A673 (cell line): ENCODE measurements at regions of chr1 and their contacts with region 1.

Region 1: DNA sequence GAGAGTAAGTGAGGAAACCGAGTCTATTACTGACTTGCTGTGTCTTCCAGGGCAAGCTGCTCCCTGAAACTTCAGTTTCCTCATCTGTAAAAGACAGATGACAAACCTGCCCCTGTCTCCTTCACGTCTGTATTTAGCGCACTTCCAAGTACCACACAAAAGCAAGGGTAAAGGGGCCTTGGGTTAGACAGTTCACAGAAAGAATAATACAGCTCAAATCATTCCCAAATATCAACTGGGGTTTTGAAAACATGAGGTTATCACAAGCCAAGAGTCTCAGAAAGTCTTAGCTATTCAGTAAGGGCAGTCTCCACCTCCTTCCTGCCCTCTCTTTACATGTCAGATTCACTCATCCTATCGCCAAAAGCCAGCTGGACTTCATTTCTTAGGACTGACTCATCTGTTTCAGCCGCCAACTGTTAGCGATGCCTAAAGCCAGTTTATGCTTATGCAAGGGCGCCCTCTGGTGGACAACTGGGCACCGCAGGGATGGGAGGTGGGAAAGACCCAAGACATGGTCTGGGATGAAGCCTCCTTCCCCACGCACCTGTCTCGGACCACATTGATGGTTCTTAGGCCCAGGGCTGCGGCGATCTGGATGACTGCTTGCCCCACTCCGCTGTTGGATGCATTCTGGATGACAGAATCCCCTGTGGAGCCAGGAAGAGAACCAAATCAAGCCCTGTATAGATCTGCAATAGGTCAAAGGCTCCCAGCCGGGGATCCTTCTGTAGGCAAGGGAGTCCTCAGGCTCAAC is 21.1 kb upstream of the SRSF4 start:
- DNase-seq: peak; percentile 95
- H3K4me3 ChIP-seq: no peak overlapping the region
- H3K27ac ChIP-seq: peak overlapping the region; percentile 1
- H3K4me1 ChIP-seq: peaks cover 8% of the 10 kb centered on the region
- H3K27me3 ChIP-seq: no peaks in the 10 kb centered on the region
- CTCF ChIP-seq: peak; percentile 98

Region 2: DNA sequence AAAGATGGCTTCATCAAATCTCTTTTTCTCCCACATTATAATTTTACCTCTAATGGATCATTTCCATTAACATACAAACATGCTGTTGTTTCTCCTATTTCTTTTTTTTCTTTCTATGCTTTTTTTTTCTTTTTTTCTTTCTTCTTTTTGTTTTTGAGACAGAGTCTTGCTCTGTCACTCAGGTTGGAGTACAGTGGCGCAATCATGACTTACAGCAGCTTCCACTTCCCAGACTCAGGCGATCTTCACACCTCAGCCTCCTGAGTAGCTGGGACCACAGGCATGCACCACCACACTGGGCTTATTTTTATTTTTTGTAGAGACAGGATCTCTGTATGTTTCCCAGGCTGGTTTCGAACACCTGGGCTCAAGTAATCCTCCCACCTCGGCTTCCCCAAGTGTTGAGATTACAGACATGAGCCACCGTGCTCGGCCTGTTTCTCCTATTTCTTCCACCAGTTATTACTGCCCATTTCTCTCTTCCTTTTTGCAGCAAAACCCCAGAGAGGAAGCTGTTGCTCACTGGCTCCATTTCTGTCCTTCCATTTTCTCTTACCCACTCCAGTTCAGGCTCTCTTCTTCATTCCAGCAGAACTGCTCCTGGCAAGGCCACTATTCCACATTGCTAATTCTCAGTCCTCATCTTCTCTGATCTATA is 422.9 kb before region 1 on chr1:
- CTCF ChIA-PET with region 1: interaction called, 5 read pairs
- POLR2A ChIA-PET with region 1: no interaction called
- intact Hi-C with region 1: loop called (anchors 2 kb)
- DNase-seq: no peak
- H3K4me3 ChIP-seq: no peak overlapping the region
- H3K27ac ChIP-seq: no peak overlapping the region
- H3K4me1 ChIP-seq: no peaks in the 10 kb centered on the region
- H3K27me3 ChIP-seq: no peaks in the 10 kb centered on the region
- CTCF ChIP-seq: no peak

Region 3: GRCh38 chr1:29218223-29218622 is 15.5 kb after region 1 on chr1:
- CTCF ChIA-PET with region 1: interaction called, 15 read pairs
- POLR2A ChIA-PET with region 1: no interaction called
- intact Hi-C with region 1: no loop called
- DNase-seq: no peak
- H3K4me3 ChIP-seq: no peak overlapping the region
- H3K27ac ChIP-seq: peak overlapping the region; percentile 24
- H3K4me1 ChIP-seq: peaks cover 8% of the 10 kb centered on the region
- H3K27me3 ChIP-seq: no peaks in the 10 kb centered on the region
- CTCF ChIP-seq: no peak